ENCODE measurements at regions of chr16 and their contacts with region 1.

Region 1: DNA sequence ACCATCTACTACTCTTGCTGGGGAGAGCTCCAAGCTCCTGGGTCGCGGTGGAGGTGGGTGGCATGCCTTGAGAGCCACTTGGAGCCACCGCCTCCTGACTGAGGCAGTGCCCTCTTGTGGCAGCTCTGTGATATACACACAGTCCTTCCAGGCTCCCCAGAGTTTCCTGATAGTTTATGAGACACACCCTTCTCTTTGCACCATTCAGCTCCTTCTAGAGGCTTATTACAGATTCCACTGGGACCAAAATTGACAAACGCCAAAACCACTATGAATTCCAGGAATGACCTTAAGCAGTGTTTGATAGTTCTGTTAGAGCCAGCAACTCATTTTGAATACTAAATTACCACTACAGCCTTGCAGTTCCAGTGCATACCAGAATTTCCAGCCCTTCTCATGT is 170.1 kb upstream of the CDH13 start:
- DNase-seq: peak in 5 of 9 experiments; percentile 6 to 71 (median 15)
- ATAC-seq: no peak
- H3K4me3 ChIP-seq: no peak overlapping the region
- H3K4me3 Mint-ChIP-seq: no peak overlapping the region
- H3K27ac ChIP-seq: no peak overlapping the region
- H3K27ac Mint-ChIP-seq: no peak overlapping the region
- H3K4me1 ChIP-seq: peaks cover 4% of the 10 kb centered on the region
- H3K4me1 Mint-ChIP-seq: peaks cover 3% of the 10 kb centered on the region
- H3K27me3 ChIP-seq: no peaks in the 10 kb centered on the region
- H3K27me3 Mint-ChIP-seq: peaks cover 5% of the 10 kb centered on the region
- CTCF ChIP-seq: peak; percentile 24

Region 2: DNA sequence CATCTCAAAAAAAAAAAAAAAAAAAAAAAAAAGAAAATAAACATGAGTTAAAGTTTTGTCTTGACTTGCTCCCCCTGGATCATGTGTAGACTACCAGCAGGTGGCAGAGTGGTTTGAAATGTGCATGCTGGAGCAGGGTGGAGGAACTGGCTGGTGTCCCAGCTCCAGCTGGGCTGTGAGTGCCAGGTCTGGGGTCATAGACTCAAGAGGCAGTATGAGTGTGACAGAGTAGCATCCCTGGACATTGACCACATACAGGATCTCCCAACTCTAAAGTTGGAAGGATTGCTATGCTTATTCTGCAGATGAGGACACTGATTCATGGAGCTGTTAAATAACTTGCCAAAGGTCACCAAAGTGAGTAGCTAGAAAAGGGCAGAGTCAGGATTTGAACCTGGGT is 88.6 kb before region 1 on chr16:
- CTCF ChIA-PET with region 1: interaction called, 6 read pairs
- POLR2A ChIA-PET with region 1: no interaction called
- intact Hi-C with region 1: loop called in 1 of 2 experiments (anchors 2 kb)
- DNase-seq: peak in 2 of 9 experiments; percentile 30 to 61
- ATAC-seq: no peak
- H3K4me3 ChIP-seq: no peak overlapping the region
- H3K4me3 Mint-ChIP-seq: no peak overlapping the region
- H3K27ac ChIP-seq: no peak overlapping the region
- H3K27ac Mint-ChIP-seq: no peak overlapping the region
- H3K4me1 ChIP-seq: no peaks in the 10 kb centered on the region
- H3K4me1 Mint-ChIP-seq: no peaks in the 10 kb centered on the region
- H3K27me3 ChIP-seq: no peaks in the 10 kb centered on the region
- H3K27me3 Mint-ChIP-seq: no peaks in the 10 kb centered on the region
- CTCF ChIP-seq: no peak

Region 3: DNA sequence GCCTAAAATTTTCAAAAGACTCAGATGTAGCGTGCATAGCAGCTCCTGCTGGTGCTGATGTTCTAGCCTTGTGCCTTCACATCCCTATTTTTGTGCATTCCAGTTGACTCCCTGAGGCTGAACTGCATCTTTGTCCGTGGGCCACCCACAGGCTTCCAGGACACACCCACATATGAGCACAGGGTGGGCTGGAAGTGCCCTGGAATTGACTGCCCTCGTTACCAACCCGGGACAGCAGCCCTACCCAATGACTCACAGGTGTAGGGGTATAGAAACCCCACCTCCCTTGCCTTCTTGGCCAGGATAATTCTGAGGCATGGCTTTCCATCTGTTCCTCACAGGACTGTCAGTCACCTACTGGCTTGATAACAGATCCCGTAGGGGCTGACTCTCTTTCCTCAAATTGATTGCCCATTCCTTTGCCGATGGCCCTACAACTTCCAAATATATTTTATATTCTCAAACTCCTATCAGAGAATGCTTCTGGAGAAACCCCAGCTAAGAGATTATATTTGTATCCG is 104.2 kb after region 1 on chr16:
- CTCF ChIA-PET with region 1: no interaction called
- POLR2A ChIA-PET with region 1: no interaction called
- intact Hi-C with region 1: no loop called
- DNase-seq: no peak
- ATAC-seq: no peak
- H3K4me3 ChIP-seq: no peak overlapping the region
- H3K4me3 Mint-ChIP-seq: no peak overlapping the region
- H3K27ac ChIP-seq: no peak overlapping the region
- H3K27ac Mint-ChIP-seq: no peak overlapping the region
- H3K4me1 ChIP-seq: no peaks in the 10 kb centered on the region
- H3K4me1 Mint-ChIP-seq: no peaks in the 10 kb centered on the region
- H3K27me3 ChIP-seq: no peaks in the 10 kb centered on the region
- H3K27me3 Mint-ChIP-seq: peaks cover 7% of the 10 kb centered on the region
- CTCF ChIP-seq: no peak

Region 4: GRCh38 chr16:82612263-82612662 is 155.6 kb after region 1 on chr16:
- CTCF ChIA-PET with region 1: no interaction called
- POLR2A ChIA-PET with region 1: no interaction called
- intact Hi-C with region 1: no loop called
- DNase-seq: no peak
- ATAC-seq: no peak
- H3K4me3 ChIP-seq: no peak overlapping the region
- H3K4me3 Mint-ChIP-seq: no peak overlapping the region
- H3K27ac ChIP-seq: no peak overlapping the region
- H3K27ac Mint-ChIP-seq: no peak overlapping the region
- H3K4me1 ChIP-seq: no peaks in the 10 kb centered on the region
- H3K4me1 Mint-ChIP-seq: no peaks in the 10 kb centered on the region
- H3K27me3 ChIP-seq: no peaks in the 10 kb centered on the region
- H3K27me3 Mint-ChIP-seq: peaks cover 5% of the 10 kb centered on the region
- CTCF ChIP-seq: no peak